Activated CD8-positive, alpha-beta memory T cell treated with anti-CD3 and anti-CD28 coated beads, Interleukin-2, amount 10 ng/mL, durations not matched to agents 7 days and 5 days (primary cell): ENCODE measurements at regions of chrX and their contacts with region 1.

Region 1: GRCh38 chrX:153032397-153033118 is 23.7 kb upstream of the PNMA3 start:
- DNase-seq: peak; percentile 79
- ATAC-seq: peak; percentile 86
- H3K4me3 Mint-ChIP-seq: peak overlapping the region; percentile 83
- H3K27ac Mint-ChIP-seq: peak overlapping the region; percentile 92
- H3K4me1 Mint-ChIP-seq: peaks cover 16% of the 10 kb centered on the region
- H3K27me3 Mint-ChIP-seq: no peaks in the 10 kb centered on the region

Region 2: DNA sequence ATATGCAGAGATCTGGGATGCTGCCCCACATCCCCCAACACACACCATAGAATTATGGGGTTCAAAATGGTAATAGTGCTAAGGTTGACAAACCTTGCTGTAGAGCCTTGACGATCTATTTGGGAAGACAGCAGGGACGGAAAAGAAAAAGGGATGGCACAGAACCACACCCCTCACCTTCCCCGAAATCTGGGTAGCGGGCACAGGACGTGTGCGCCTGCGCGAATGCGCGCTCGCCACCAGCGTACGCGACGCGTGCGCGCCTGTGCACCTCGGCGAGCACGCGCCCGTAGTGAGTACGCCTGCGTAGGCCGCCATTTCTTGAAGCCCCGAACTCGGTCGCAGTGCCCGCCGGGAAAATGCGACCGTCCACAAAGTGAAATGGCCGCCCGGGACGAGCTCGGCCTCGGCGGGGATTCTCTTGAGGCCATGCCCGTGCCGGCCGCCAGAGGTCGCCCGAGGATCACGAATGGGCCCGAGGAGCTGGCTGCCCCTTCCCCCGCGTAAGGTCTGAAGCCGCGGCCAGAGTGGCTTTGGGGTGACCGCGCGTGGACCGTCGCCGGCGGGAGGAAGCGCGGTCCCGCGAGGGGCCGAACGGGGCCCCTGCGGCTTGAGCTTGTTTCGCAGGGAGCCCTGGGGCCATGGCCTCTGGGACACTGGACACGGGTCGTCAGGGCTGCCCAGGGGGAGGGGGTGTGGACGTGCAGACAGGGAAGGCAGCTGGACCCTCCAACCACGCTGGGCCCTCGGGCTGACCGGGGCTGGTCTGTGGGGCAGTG is 91.0 kb before region 1 on chrX:
- CTCF ChIA-PET with region 1: interaction called, 11 read pairs
- DNase-seq: peak; percentile 93
- ATAC-seq: peak; percentile 99
- H3K4me3 Mint-ChIP-seq: peak overlapping the region; percentile 85
- H3K27ac Mint-ChIP-seq: peak overlapping the region; percentile 75
- H3K4me1 Mint-ChIP-seq: peaks cover 11% of the 10 kb centered on the region
- H3K27me3 Mint-ChIP-seq: no peaks in the 10 kb centered on the region

Region 3: GRCh38 chrX:152958524-152959465 is 73.8 kb before region 1 on chrX:
- CTCF ChIA-PET with region 1: interaction called, 10 read pairs
- DNase-seq: peak; percentile 92
- ATAC-seq: peak; percentile 98
- H3K4me3 Mint-ChIP-seq: peak overlapping the region; percentile 70
- H3K27ac Mint-ChIP-seq: peak overlapping the region; percentile 84
- H3K4me1 Mint-ChIP-seq: peaks cover 10% of the 10 kb centered on the region
- H3K27me3 Mint-ChIP-seq: no peaks in the 10 kb centered on the region

Region 4: GRCh38 chrX:153055871-153056749 is 23.6 kb after region 1 on chrX and contains the start of gene PNMA3:
- CTCF ChIA-PET with region 1: no interaction called
- DNase-seq: no peak
- ATAC-seq: no peak
- H3K4me3 Mint-ChIP-seq: no peak within 1 kb of the TSS
- H3K27ac Mint-ChIP-seq: no peak within 1 kb of the TSS
- H3K4me1 Mint-ChIP-seq: no peaks in the 10 kb centered on the region
- H3K27me3 Mint-ChIP-seq: peaks cover 4% of the 10 kb centered on the region
- total RNA-seq, gene PNMA3: 1.0 to 2.2 TPM

Region 5: DNA sequence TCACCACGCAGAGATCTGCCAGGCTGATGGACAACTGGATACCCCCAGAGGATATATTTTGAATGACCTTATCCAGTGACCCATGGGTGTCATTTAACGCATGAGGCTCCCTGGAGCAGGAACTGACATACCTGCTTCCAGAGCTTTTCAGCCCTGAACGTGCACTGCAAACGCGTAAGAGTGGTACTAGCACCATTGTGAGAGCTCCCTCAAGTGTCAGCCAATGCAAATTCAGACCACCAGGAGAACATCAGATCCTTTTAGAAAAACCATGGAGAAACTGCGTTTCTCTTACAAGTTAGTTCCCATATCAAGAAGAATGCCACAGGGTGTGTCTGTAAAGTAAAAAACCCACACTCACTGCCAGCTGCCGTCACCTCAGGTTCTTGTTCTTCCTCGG is 406.0 kb after region 1 on chrX:
- CTCF ChIA-PET with region 1: interaction called, 11 read pairs
- DNase-seq: no peak
- ATAC-seq: no peak
- H3K4me3 Mint-ChIP-seq: no peak overlapping the region
- H3K27ac Mint-ChIP-seq: no peak overlapping the region
- H3K4me1 Mint-ChIP-seq: no peaks in the 10 kb centered on the region
- H3K27me3 Mint-ChIP-seq: peaks cover 6% of the 10 kb centered on the region